ENCODE measurements at regions of chr11 and their contacts with region 1.

Region 1: DNA sequence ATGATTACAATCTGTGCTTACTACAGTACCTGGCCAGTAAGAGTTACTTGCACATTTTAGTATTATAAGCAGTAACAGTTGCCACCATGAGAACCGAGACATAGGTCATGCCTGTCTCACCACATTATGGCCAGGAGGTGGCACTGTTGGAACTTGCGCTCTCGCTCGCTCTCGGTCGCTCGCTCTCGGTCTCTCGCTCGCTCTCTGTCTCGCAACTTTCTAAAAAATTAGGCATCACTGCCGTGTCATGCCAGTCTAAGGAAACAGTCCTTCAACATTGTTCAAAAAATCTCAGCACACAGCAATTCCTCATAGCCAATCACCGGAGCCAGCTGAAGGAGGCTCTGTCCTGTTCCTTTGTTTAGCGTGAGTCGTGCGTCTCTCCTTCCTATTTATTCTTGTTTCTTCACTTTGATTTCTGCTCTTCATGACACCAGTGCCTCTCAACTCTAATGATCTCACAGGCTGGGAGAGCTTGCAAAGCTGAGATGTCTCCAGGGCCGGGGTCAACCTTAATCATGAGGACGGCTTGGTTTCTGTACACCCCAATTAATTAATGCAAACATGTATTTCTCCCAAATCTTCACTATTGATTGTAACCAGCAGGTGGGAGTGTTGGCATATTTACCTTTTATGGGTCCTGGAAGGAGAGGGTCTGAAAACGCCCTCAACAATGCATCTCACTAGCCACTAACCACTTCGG is 6.3 kb upstream of the ADAMTS8 start:
- DNase-seq: peak; percentile 69 to 84
- H3K4me3 ChIP-seq: peak overlapping the region; percentile 69
- H3K27ac ChIP-seq: peak overlapping the region; percentile 34; the same call in 1 of the 2 replicates
- H3K4me1 ChIP-seq: 0 out of 2 replicates have a peak, but pooled peaks cover 4% of the 10 kb centered on the region
- H3K27me3 ChIP-seq: peaks cover 10% of the 10 kb centered on the region; the same call in 1 of the 2 replicates
- CTCF ChIP-seq: peak; percentile 86

Region 2: GRCh38 chr11:130390071-130390758 is 44.5 kb before region 1 on chr11:
- CTCF ChIA-PET with region 1: no interaction called
- POLR2A ChIA-PET with region 1: no interaction called
- intact Hi-C with region 1: loop called (anchors 5 kb)
- DNase-seq: peak in 1 of 2 experiments; percentile 35
- H3K4me3 ChIP-seq: no peak overlapping the region
- H3K27ac ChIP-seq: no peak overlapping the region
- H3K4me1 ChIP-seq: no peaks in the 10 kb centered on the region
- H3K27me3 ChIP-seq: peaks cover 28% of the 10 kb centered on the region
- CTCF ChIP-seq: peak; percentile 45; the same call in 1 of the 2 replicates

Region 3: GRCh38 chr11:130527636-130528297 is 93.1 kb after region 1 on chr11:
- CTCF ChIA-PET with region 1: no interaction called
- POLR2A ChIA-PET with region 1: no interaction called
- intact Hi-C with region 1: loop called (anchors 5 kb)
- DNase-seq: peak; percentile 50 to 70
- H3K4me3 ChIP-seq: no peak overlapping the region
- H3K27ac ChIP-seq: peak overlapping the region; percentile 55
- H3K4me1 ChIP-seq: peaks cover 48% of the 10 kb centered on the region
- H3K27me3 ChIP-seq: no peaks in the 10 kb centered on the region
- CTCF ChIP-seq: no peak

Region 4: DNA sequence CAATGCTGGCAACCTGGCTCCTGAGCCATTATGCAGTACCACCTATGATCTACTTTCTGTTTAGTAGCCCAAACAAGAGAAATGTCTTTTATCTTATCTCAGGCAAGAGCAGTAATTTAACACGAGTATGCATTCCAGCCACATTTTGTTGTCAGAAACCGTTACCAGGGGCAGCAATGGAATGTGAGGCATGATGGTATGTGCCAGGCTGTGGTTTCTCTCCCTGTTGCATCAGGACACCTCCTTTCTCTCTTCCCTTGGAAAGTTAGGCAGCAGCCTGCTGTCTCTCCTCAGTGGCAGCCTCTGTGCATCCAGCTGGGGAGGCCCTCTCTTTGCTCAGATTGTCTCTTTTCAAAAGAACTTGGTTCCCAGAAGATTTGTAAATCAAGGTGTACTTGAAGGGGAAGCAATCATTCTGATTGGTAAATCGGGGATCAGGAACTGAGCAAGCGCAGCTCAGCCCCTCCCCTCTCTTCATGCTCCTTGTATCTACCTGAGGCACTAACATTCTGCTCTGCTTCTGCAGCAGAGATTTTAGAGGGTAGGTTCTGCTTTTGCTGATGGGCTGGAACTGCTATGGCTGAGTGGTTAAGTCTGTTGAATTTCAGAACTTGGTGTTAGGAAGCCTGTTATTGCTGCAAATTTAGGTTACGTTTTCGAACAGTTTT is 242.9 kb after region 1 on chr11:
- CTCF ChIA-PET with region 1: no interaction called
- POLR2A ChIA-PET with region 1: no interaction called
- intact Hi-C with region 1: loop called (anchors 1 kb)
- DNase-seq: peak; percentile 70 to 74
- H3K4me3 ChIP-seq: no peak overlapping the region; the same call in 1 of the 2 replicates
- H3K27ac ChIP-seq: no peak overlapping the region
- H3K4me1 ChIP-seq: peaks cover 15% of the 10 kb centered on the region
- H3K27me3 ChIP-seq: no peaks in the 10 kb centered on the region
- CTCF ChIP-seq: no peak

Region 5: GRCh38 chr11:130861902-130862860 is 427.5 kb after region 1 on chr11:
- CTCF ChIA-PET with region 1: interaction called, 17 read pairs
- POLR2A ChIA-PET with region 1: no interaction called
- intact Hi-C with region 1: loop called (anchors 1 kb)
- DNase-seq: peak; percentile 74 to 79
- H3K4me3 ChIP-seq: no peak overlapping the region
- H3K27ac ChIP-seq: no peak overlapping the region
- H3K4me1 ChIP-seq: no peaks in the 10 kb centered on the region
- H3K27me3 ChIP-seq: no peaks in the 10 kb centered on the region
- CTCF ChIP-seq: peak; percentile 100

Measured in PC-9 (cell line).